Naive thymus-derived CD4-positive, alpha-beta T cell (primary cell): ENCODE measurements at regions of chr1 and their contacts with region 1.

Region 1: GRCh38 chr1:3564921-3565827 is 46.1 kb downstream of the MEGF6 start:
- DNase-seq: peak in 8 of 9 donors; percentile 24 to 56 (median 42)
- ATAC-seq: peak; percentile 52
- H3K4me3 ChIP-seq: no peak overlapping the region
- H3K4me3 Mint-ChIP-seq: no peak overlapping the region
- H3K27ac ChIP-seq: no peak overlapping the region
- H3K27ac Mint-ChIP-seq: no peak overlapping the region
- H3K4me1 ChIP-seq: no peaks in the 10 kb centered on the region
- H3K4me1 Mint-ChIP-seq: no peaks in the 10 kb centered on the region
- H3K27me3 ChIP-seq: no peaks in the 10 kb centered on the region
- H3K27me3 Mint-ChIP-seq: no peaks in the 10 kb centered on the region

Region 2: DNA sequence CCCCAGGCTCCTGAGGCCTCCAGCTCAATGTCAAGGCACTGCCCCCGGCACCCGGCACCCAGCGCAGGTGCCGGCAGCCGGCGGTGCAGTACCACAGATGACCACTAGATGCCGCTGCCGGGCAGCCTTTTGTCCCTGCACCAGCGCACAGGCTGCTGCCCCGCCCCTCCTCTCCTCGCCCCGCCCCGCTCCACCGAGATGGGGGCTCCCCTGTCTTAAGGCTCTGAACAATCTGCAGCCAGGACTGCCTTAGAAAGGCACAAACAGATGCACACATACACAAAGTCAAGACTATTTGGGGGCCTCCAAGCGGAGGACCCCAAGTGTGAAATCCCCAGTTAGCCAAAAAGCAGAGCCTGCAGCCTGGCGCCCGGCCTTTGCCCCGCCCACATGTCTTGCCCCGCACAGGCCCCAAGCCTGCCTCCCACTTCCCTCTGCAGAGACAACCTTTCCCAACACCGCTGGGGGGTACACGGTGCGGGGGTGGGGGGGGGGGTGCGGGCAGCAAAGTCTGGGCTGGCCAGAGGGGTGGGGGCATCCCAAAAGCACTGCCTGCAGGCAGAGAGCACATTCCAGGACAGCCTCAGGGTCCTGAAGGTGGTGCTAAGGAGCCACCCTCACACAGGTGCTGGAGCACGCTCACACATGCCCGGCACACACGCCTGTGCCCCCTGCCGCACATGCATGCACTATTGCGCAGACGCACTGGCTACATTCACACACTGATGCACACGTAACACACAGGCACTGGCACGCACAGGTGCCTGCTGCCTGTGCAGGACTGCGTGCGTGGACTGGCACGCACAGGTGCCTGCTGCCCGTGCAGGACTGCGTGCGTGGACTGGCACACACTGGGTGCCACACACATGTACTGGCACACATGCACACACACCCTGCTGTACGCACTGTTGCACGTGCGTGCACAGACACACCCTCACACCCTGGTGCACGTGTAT is 73.6 kb before region 1 on chr1:
- CTCF ChIA-PET with region 1: no interaction called
- POLR2A ChIA-PET with region 1: no interaction called
- intact Hi-C with region 1: no loop called
- DNase-seq: peak; percentile 65 to 90 (median 83)
- ATAC-seq: peak; percentile 96
- H3K4me3 ChIP-seq: no peak overlapping the region
- H3K4me3 Mint-ChIP-seq: peak overlapping the region in 7 of 10 donors; percentile 26 to 76 (median 62)
- H3K27ac ChIP-seq: no peak overlapping the region
- H3K27ac Mint-ChIP-seq: peak overlapping the region in 2 of 9 donors; percentile 28 to 38
- H3K4me1 ChIP-seq: no peaks in the 10 kb centered on the region
- H3K4me1 Mint-ChIP-seq: peaks cover 2 to 7% (median 5%) of the 10 kb centered on the region in 7 donors
- H3K27me3 ChIP-seq: no peaks in the 10 kb centered on the region
- H3K27me3 Mint-ChIP-seq: no peaks in the 10 kb centered on the region

Region 3: DNA sequence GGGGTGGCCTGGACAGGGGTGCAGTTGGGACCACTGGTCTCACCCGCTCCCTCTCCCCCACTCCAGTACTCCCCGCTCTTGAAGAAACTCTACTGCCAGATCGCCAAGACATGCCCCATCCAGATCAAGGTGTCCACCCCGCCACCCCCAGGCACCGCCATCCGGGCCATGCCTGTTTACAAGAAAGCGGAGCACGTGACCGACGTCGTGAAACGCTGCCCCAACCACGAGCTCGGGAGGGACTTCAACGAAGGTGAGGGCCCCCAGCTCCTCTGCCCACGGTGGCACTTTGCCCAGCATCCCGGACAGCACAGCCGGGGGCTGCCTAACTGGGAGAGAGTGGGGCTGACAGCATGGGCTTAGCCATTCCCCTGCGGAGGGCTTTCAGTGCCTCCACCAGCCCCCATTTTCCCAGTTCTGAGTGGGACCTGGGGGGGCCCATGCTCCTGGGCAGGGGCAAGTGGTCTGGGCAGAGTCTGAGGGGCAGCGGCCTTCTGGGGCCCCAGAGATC is 156.8 kb after region 1 on chr1:
- CTCF ChIA-PET with region 1: no interaction called
- POLR2A ChIA-PET with region 1: no interaction called
- intact Hi-C with region 1: loop called in 1 of 2 experiments (anchors 5 kb)
- DNase-seq: no peak
- ATAC-seq: no peak
- H3K4me3 ChIP-seq: no peak overlapping the region
- H3K4me3 Mint-ChIP-seq: peak overlapping the region in 1 of 10 donors; percentile 39
- H3K27ac ChIP-seq: no peak overlapping the region
- H3K27ac Mint-ChIP-seq: peak overlapping the region in 1 of 9 donors; percentile 90
- H3K4me1 ChIP-seq: peaks cover 0 to 7% of the 10 kb centered on the region in 2 donors
- H3K4me1 Mint-ChIP-seq: peaks cover 0 to 12% (median 2%) of the 10 kb centered on the region in 7 donors
- H3K27me3 ChIP-seq: no peaks in the 10 kb centered on the region
- H3K27me3 Mint-ChIP-seq: no peaks in the 10 kb centered on the region